ENCODE measurements at regions of chr11 and their contacts with region 1.

Region 1: GRCh38 chr11:67439321-67439883 is 1.9 kb upstream of the PTPRCAP start:
- DNase-seq: no peak
- ATAC-seq: peak; percentile 43
- H3K4me3 ChIP-seq: no peak overlapping the region
- H3K27ac ChIP-seq: peak overlapping the region; percentile 79; the same call in 1 of the 2 replicates
- H3K4me1 ChIP-seq: peaks cover 70% of the 10 kb centered on the region
- H3K27me3 ChIP-seq: no peaks in the 10 kb centered on the region
- CTCF ChIP-seq: no peak; the same call in 1 of the 2 replicates

Region 2: GRCh38 chr11:67457453-67457852 is 18.1 kb after region 1 on chr11:
- CTCF ChIA-PET with region 1: no interaction called
- POLR2A ChIA-PET with region 1: no interaction called
- in situ Hi-C with region 1: no loop called
- intact Hi-C with region 1: no loop called
- DNase-seq: no peak
- ATAC-seq: no peak
- H3K4me3 ChIP-seq: no peak overlapping the region
- H3K27ac ChIP-seq: no peak overlapping the region
- H3K4me1 ChIP-seq: no peaks in the 10 kb centered on the region
- H3K27me3 ChIP-seq: no peaks in the 10 kb centered on the region
- CTCF ChIP-seq: no peak

Region 3: DNA sequence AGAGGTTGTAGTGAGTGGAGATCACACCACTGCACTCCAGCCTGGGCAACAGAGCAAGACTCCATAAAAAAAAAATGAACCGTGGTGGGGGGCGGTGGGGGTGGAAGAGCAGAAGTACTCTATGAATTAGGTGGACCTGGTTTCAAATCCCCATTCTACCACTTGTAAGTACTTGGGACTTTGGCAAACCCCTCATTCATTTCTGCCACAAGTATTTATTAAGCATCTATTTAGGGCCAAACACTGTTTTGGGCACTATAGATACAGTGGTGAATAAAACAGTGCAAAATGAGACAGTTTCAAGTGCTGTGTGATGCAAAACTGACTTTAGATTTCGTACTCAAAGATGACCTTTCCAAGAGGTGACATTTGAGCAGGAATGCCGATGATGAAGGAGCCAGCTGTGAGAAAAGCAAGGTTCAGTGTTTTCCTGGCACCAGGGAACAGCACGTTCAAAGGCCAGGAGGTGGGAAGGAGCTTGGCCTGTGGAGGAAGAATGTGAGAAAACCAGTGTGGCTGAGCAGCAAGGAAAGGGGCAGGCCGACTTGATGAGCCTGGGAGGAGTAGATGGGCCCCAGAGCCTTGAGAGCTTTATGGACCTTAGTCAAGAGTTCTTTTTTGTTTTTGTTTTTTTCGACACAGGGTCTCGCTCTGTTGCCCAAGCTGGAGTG is 31.1 kb after region 1 on chr11:
- CTCF ChIA-PET with region 1: interaction called, 11 read pairs
- POLR2A ChIA-PET with region 1: no interaction called
- in situ Hi-C with region 1: no loop called
- intact Hi-C with region 1: no loop called
- DNase-seq: no peak
- ATAC-seq: no peak
- H3K4me3 ChIP-seq: no peak overlapping the region
- H3K27ac ChIP-seq: no peak overlapping the region
- H3K4me1 ChIP-seq: peaks cover 26% of the 10 kb centered on the region
- H3K27me3 ChIP-seq: no peaks in the 10 kb centered on the region
- CTCF ChIP-seq: no peak